ENCODE measurements at regions of chr10 and their contacts with region 1.

Region 1: DNA sequence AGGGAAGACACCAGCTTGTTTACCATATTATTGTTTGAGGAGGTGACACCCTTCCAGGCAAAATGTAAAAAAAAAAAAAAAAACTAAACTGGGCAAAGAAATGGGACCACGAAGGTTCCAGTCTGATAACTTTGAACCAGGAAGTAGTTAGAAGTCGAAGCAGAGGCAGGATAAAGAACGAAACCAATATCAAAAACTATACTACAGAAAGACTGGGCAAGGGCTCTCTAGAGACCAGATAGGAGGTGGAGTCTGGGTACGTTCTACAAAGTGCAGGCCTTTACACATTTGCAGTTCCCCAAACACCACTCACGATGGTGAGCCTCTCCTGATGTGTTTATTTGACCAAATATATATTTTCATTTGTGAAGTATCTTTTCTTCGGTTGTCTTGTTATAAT is 125.7 kb upstream of the CDK1 start:
- DNase-seq: peak; percentile 5
- H3K4me3 ChIP-seq: no peak overlapping the region
- H3K27ac ChIP-seq: no peak overlapping the region
- H3K4me1 ChIP-seq: peaks cover 7% of the 10 kb centered on the region
- CTCF ChIP-seq: no peak

Region 2: GRCh38 chr10:60480865-60481563 is 171.6 kb before region 1 on chr10:
- CTCF ChIA-PET with region 1: no interaction called
- POLR2A ChIA-PET with region 1: no interaction called
- intact Hi-C with region 1: no loop called
- DNase-seq: no peak
- H3K4me3 ChIP-seq: no peak overlapping the region
- H3K27ac ChIP-seq: no peak overlapping the region
- H3K4me1 ChIP-seq: no peaks in the 10 kb centered on the region
- CTCF ChIP-seq: no peak

Region 3: DNA sequence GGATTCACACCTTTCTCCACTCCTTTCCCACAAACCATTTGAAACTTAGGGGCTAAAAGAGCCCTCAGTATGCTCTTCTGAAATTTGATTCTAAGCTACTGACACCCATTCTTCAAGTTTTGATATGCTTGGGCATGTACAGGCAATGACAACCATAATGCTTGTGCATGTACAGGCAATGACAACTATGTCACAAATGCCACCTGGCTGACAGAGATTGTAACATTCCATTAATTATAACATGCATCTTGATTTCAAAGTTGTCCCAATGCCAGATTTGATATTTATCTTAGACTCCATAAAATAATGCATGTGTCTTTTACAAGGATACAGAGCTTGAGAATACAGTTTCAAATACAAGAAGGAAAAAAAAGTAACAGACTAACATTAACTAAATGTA is 108.1 kb after region 1 on chr10:
- CTCF ChIA-PET with region 1: no interaction called
- POLR2A ChIA-PET with region 1: no interaction called
- intact Hi-C with region 1: loop called (anchors 10 kb)
- DNase-seq: no peak
- H3K4me3 ChIP-seq: no peak overlapping the region
- H3K27ac ChIP-seq: no peak overlapping the region
- H3K4me1 ChIP-seq: no peaks in the 10 kb centered on the region
- CTCF ChIP-seq: no peak

Region 4: DNA sequence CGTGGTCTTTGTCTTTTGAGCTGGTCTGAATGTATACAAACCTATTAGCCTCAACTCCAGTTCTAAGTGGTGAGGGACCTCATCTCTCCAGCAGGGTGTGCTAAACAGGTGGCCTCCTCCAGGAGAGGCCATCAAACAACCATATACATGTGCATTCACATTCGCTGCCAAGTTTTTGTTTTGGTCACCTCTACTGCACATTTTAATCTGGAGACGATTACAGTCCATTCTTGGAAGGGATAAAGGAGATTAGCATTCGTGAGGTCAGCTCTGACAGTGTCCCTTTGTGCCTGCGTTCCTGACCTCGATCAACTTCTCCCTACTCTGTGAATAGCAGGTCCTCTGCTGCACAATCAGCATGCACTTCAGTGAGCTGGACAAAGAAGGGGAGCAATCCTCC is 230.6 kb after region 1 on chr10:
- CTCF ChIA-PET with region 1: no interaction called
- POLR2A ChIA-PET with region 1: no interaction called
- intact Hi-C with region 1: no loop called
- DNase-seq: peak; percentile 12
- H3K4me3 ChIP-seq: no peak overlapping the region
- H3K27ac ChIP-seq: no peak overlapping the region
- H3K4me1 ChIP-seq: no peaks in the 10 kb centered on the region
- CTCF ChIP-seq: peak; percentile 60